Sigmoid colon (tissue), 7 donors: ENCODE measurements at regions of chr9 and their contacts with region 1.

Region 1: DNA sequence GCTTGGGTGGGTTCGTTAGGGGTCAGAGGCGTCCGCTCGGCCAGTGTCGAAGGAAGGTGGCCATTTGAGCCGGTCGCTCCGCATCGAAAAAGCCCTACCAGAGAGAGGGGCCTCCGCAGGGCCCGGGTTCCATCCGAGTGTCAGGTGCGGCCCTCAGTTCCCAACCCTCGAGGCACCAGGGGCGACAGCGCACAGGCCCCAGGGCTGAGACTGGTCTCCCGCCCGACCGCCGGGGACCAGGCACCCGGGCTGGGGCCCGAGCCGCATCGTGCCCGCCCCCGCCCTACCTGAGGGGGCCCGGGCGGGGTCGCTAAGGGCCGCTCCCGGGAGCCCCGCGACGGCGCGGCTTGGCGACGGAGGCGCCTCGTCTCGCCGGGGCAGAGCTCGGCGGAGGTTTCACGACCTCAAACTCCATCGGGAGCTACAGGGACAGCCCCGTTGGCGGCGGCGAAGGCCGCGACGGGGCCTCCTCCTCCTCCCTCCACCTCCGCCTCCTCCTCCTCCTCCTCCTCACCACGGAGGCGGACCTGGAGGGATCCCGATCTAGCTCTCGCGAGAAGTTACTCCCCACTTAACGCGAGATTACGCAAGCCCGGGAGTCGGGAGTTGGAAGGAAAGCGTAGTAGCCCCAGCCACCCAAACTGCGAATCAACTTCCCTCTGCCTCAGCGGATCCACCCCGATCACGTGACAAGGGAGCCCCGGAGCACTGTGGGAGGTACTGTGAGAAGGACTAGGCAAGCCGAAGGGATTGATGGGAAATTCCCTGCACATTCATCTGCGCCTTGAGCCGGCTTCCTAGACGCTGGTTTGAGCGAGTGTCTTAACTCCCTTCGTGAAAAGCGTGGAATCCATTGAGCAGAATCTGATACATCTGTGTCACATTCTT is at the start of gene RC3H2:
- DNase-seq: peak; percentile 100
- H3K4me3 ChIP-seq: peak within 1 kb of the TSS; percentile 54 to 97 (median 94)
- H3K27ac ChIP-seq: peak within 1 kb of the TSS; percentile 97 to 99 (median 98)
- H3K4me1 ChIP-seq: peaks cover 0 to 45% (median 39%) of the 10 kb centered on the region in 4 donors
- H3K27me3 ChIP-seq: no peaks in the 10 kb centered on the region
- CTCF ChIP-seq: no peak
- EP300 ChIP-seq: peak in 1 of 4 donors; percentile 50
- POLR2A ChIP-seq: peak; percentile 92 to 93
- total RNA-seq, gene RC3H2: 43.8 to 49.5 (median 46.8) TPM

Region 2: GRCh38 chr9:122940603-122941559 is 35.8 kb after region 1 on chr9 and contains the start of gene RABGAP1:
- intact Hi-C with region 1: loop called (anchors 2 kb)
- DNase-seq: peak; percentile 100
- H3K4me3 ChIP-seq: peak within 1 kb of the TSS; percentile 72 to 86 (median 80)
- H3K27ac ChIP-seq: peak within 1 kb of the TSS; percentile 92 to 97 (median 94)
- H3K4me1 ChIP-seq: peaks cover 0 to 48% (median 34%) of the 10 kb centered on the region in 4 donors
- H3K27me3 ChIP-seq: no peaks in the 10 kb centered on the region
- CTCF ChIP-seq: no peak
- EP300 ChIP-seq: peak in 1 of 4 donors; percentile 32
- POLR2A ChIP-seq: peak; percentile 76 to 81
- total RNA-seq, gene RABGAP1: 90.6 to 110 (median 98.9) TPM

Region 3: DNA sequence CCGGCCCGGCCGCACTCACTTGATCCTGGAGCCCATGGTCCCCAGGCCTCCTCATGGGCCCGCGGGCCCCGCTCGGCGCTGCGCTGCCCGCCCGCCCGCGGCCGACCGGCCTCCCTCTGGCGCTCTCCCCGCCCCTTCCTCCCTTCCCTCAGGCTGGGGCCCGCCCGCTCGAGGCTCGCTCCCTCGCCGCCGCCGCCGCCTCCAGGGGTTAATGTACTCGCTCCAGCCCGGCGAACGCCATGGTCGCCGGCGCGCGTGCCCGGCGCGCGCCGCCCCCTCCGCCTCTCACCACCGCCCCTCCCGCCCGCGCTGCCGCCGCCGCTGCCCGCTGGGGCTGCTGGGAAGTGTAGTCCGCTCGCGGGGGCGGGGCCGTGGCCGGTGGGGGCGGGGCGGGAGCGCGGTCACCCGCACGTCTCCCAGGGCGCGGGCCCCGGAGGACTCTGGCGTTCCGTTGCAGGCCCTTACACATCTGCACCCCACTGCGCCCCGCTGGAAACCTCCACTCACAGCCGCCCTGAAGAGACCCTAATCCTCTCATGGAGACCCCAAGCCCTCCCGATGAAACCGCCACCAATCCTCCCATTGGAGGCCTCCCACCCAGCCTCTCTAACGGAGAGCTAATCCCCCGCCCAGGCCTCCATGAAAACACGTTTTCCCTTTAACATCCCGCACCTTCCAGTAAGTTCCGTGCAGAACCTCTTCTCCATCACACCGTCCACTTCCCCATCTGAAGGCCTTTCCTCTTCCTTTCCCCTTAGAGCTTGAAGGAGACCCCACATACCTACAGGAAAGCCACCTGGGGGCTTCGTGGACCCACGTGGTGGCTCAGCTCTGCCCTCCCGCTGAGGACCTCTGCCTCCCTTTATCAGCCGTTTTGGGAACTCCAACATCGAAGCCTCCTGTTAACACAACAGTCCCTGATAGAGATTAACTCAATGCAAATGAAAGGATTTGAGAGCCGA is 1025.1 kb after region 1 on chr9 and contains the start of gene DENND1A:
- intact Hi-C with region 1: no loop called
- DNase-seq: peak; percentile 94
- H3K4me3 ChIP-seq: peak within 1 kb of the TSS; percentile 64 to 89 (median 80)
- H3K27ac ChIP-seq: peak within 1 kb of the TSS; percentile 68 to 79 (median 74)
- H3K4me1 ChIP-seq: peaks cover 0 to 27% (median 25%) of the 10 kb centered on the region in 4 donors
- H3K27me3 ChIP-seq: no peaks in the 10 kb centered on the region
- CTCF ChIP-seq: no peak
- EP300 ChIP-seq: no peak
- POLR2A ChIP-seq: no peak
- total RNA-seq, gene DENND1A: 12.8 to 33.2 (median 14.8) TPM